PC-3 (cell line): ENCODE measurements at regions of chr12 and their contacts with region 1.

Region 1: DNA sequence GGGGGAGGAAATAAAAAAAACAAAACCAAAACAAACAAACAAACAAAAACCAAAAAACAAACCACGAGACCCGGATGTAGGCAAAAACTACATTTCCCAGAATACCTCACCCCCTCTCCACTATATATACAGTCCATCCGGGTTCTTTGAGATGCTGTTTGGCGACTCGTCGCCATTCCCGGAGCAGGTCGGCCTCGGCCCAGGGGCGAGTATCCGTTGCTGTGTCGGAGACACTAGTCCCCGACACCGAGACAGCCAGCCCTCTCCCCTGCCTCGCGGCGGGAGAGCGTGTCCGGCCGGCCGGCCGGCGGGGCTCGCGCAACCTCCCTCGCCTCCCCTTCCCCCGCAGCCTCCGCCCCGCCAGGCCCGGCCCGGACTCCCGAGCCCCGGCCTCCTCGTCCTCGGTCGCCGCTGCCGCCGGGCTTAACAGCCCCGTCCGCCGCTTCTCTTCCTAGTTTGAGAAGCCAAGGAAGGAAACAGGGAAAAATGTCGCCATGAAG is at the start of gene RNF10:
- DNase-seq: peak; percentile 94
- ATAC-seq: peak; percentile 27
- H3K4me3 ChIP-seq: peak within 1 kb of the TSS; percentile 92
- H3K27ac ChIP-seq: peak within 1 kb of the TSS; percentile 70
- H3K4me1 ChIP-seq: peaks cover 36% of the 10 kb centered on the region
- H3K27me3 ChIP-seq: no peaks in the 10 kb centered on the region
- CTCF ChIP-seq: no peak
- total RNA-seq, gene RNF10: 79.7 and 161 TPM in 2 replicates

Region 2: DNA sequence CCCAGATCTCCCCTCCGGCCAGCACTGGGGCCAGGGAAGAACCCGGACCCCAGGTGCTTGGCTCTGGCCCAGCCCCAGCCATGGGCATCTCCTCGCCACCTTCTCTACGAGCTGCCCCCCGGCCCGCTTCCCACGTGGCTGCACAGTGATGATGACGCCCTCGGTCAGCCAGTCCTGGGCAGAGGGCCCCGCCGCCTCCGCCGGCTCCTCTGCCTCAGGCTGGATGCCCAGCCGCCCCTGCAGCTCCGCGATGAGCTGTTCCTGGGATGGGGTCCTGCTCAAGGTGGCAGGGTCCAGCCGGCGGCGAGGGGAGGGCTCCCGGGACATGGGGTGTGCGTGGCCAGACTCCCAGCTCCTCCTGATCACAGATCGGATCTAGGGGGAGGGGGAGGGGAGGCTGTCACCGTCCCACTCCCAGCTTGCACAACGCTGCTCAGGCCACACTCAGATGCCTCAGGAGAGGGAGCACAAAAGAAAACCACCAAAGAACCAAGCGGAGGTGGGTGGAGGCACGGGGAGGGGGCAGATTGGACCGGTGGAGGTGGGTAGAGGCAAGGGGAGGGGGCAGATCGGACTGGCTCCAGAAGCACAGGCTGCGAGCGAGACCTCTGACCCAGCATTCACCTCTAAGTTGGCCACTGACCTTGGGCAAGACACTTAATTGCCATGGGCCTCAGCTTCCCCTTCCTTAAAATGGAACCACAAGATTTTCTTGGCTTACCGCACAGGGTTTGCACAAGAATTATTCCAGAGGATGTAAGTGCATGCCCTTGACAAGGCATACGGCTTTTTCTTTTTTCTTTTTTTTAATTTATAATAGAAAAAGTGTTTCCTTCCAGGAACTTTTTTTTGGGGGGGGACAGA is 317.3 kb before region 1 on chr12:
- CTCF ChIA-PET with region 1: no interaction called
- POLR2A ChIA-PET with region 1: no interaction called
- intact Hi-C with region 1: no loop called
- DNase-seq: no peak
- ATAC-seq: no peak
- H3K4me3 ChIP-seq: no peak overlapping the region
- H3K27ac ChIP-seq: no peak overlapping the region
- H3K4me1 ChIP-seq: no peaks in the 10 kb centered on the region
- H3K27me3 ChIP-seq: no peaks in the 10 kb centered on the region
- CTCF ChIP-seq: no peak

Region 3: GRCh38 chr12:120437754-120438494 is 96.3 kb before region 1 on chr12 and contains the start of gene COX6A1:
- CTCF ChIA-PET with region 1: no interaction called
- POLR2A ChIA-PET with region 1: no interaction called
- intact Hi-C with region 1: loop called (anchors 5 kb)
- DNase-seq: peak; percentile 100
- ATAC-seq: peak; percentile 98
- H3K4me3 ChIP-seq: peak within 1 kb of the TSS; percentile 83
- H3K27ac ChIP-seq: peak within 1 kb of the TSS; percentile 31
- H3K4me1 ChIP-seq: peaks cover 15% of the 10 kb centered on the region
- H3K27me3 ChIP-seq: no peaks in the 10 kb centered on the region
- CTCF ChIP-seq: no peak
- total RNA-seq, gene COX6A1: 1,664 and 2,042 TPM in 2 replicates

Region 4: DNA sequence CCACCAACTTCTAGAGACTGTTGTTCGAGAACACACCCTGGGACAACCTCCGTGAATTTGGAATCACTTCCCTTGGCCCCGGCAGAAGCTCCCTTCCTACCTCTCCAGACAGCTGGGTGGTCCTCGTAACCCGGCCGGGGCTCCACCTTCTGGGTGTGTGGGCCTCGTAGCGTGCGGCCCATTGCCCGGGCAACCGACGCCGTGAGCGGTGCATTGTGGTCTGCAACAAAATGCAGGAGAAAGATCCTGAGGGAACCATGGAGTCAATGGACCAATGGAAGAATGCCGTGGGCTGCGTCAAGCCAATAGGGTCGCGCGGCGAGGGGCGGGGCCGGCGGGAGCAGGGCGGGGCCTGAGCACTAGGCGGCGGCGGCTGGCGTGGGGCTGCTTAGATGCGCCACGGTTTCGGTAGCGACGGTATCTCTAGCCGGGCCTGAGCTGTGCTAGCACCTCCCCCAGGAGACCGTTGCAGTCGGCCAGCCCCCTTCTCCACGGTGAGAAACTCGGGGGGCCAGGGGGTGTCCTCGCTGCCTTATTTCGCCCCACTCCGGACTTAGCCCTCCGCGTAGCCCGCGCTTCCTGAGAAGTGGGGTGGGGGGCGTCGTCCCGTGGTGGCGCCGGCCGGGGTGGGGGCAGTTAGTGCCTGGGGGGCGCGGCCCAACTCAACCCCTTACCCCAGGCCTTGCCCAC is 38.4 kb before region 1 on chr12 and contains the start of gene DYNLL1:
- CTCF ChIA-PET with region 1: no interaction called
- POLR2A ChIA-PET with region 1: interaction called, 3 read pairs
- intact Hi-C with region 1: loop called (anchors 1 kb)
- DNase-seq: peak; percentile 99
- ATAC-seq: peak; percentile 92
- H3K4me3 ChIP-seq: peak within 1 kb of the TSS; percentile 95
- H3K27ac ChIP-seq: peak within 1 kb of the TSS; percentile 54
- H3K4me1 ChIP-seq: peaks cover 24% of the 10 kb centered on the region
- H3K27me3 ChIP-seq: no peaks in the 10 kb centered on the region
- CTCF ChIP-seq: no peak
- total RNA-seq, gene DYNLL1: 283 and 396 TPM in 2 replicates

Region 5: DNA sequence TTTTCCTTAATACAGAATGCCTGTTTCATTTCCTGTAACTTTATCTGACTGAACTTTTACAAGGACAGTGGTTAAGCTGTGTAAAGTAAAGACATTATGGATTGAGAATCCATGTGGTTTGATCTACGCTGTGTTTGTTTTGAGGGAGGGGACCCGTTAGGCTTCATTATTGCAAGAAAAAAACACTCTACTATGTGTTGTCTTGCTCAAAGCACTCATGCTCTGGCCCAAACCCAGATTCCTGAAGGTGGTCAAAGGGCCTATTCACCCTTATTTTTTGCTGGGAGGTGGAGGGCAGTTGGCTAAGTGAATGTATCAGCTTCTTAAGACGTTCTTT is 11.8 kb after region 1 on chr12:
- CTCF ChIA-PET with region 1: interaction called, 3 read pairs
- POLR2A ChIA-PET with region 1: interaction called, 6 read pairs
- intact Hi-C with region 1: loop called (anchors 1 kb)
- DNase-seq: peak; percentile 88
- ATAC-seq: peak; percentile 87
- H3K4me3 ChIP-seq: peak overlapping the region; percentile 58
- H3K27ac ChIP-seq: peak overlapping the region; percentile 94
- H3K4me1 ChIP-seq: peaks cover 36% of the 10 kb centered on the region
- H3K27me3 ChIP-seq: no peaks in the 10 kb centered on the region
- CTCF ChIP-seq: no peak

Region 6: GRCh38 chr12:120686690-120687577 is 152.7 kb after region 1 on chr12 and contains the start of gene MLEC:
- CTCF ChIA-PET with region 1: no interaction called
- POLR2A ChIA-PET with region 1: interaction called, 4 read pairs
- intact Hi-C with region 1: loop called (anchors 5 kb)
- DNase-seq: peak; percentile 98
- ATAC-seq: peak; percentile 76
- H3K4me3 ChIP-seq: peak within 1 kb of the TSS; percentile 96
- H3K27ac ChIP-seq: peak within 1 kb of the TSS; percentile 93
- H3K4me1 ChIP-seq: peaks cover 34% of the 10 kb centered on the region
- H3K27me3 ChIP-seq: no peaks in the 10 kb centered on the region
- CTCF ChIP-seq: peak; percentile 18; the same call in 1 of the 2 replicates
- total RNA-seq, gene MLEC: 158 and 166 TPM in 2 replicates